ENCODE measurements at regions of chr22 and their contacts with region 1.

Region 1: DNA sequence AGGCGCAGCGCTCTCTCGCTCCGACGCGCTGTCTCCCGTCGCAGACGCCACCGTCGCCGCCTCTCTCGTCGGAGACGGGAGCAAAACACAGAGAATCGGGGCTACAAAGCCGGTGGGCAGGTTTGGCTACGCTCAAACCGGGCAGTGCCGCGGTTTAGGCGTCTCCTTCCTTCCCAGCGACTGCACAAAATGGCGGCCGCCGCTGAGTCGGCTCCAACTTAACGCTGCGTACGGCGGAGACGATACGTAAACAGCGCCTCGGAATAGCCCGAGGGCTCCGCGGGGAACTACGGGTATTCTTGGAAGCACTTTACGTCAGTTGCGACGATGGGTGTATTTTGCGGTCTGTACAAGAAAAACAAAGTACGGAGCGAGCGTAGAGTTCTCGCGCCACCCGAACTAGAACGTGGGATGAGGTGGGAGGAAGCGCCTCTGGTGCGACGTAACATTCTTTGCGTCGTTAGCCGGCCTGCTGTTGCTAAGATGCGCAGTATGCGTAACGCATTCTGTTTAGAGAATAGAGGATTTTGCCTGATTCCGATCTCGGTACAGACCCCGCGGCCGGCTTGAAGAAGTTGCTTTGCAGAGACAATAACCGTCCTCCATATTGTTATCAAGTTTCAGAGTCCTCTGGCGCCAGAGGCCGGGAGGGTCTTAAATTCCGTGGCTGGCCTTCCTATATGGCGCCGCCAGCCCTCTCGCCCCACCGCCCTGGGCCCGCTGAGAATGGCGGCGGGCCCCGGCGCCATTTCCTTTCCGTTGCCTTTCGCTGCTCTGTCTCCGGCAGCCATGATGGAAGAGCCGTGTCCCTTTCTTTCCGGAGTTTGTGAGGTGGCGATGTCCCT is at the start of gene DDX17:
- DNase-seq: peak; percentile 93
- H3K4me3 Mint-ChIP-seq: peak within 1 kb of the TSS; percentile 99
- H3K27ac Mint-ChIP-seq: peak within 1 kb of the TSS; percentile 98
- H3K4me1 Mint-ChIP-seq: peaks cover 42% of the 10 kb centered on the region
- H3K27me3 Mint-ChIP-seq: no peaks in the 10 kb centered on the region
- total RNA-seq, gene DDX17: 356 and 358 TPM in 2 replicates

Region 2: DNA sequence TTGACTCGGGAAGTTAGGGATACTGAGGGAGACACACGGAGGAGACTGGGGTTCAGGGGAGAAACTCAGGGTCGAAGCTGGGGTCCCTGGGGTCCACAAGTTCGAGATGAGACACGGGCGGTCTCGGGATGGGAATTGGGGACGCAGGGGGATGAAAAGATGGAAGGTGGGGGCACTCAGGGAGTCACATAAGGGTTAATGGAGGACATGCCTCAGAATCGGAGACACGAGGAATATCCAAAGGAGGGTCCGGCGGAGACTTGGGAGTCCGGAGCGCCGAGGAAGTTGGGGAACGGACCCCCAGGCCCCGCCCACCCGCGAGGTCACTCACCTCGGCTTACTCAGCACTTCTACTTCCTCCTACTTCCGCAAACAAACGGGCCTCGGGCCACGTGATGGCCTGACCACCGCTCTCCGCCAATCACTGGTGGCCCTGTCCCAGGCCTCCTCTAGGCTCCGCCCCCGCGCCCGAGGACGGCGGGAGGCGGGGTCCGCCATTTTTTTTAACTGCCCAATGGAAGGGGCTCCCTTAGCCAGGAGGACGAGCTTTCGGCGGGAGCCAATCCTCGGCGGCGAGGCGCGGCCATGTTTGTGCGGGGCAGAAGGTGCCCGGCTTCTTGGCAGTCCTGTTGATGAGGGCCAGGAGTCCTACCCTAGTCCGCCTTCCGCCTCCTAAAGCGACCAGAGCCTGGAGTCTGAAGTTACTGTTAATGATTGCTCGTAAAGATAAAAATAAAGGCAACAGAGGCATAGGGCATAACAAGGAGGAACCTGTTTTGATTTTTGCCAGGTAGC is 324.7 kb before region 1 on chr22 and contains the start of gene PLA2G6:
- intact Hi-C with region 1: loop called (anchors 1 kb)
- DNase-seq: peak; percentile 99
- H3K4me3 Mint-ChIP-seq: peak within 1 kb of the TSS; percentile 89
- H3K27ac Mint-ChIP-seq: peak within 1 kb of the TSS; percentile 95
- H3K4me1 Mint-ChIP-seq: peaks cover 48% of the 10 kb centered on the region
- H3K27me3 Mint-ChIP-seq: peaks cover 10% of the 10 kb centered on the region
- total RNA-seq, gene PLA2G6: 34.8 and 34.9 TPM in 2 replicates

Region 3: GRCh38 chr22:38398609-38399461 is 107.5 kb before region 1 on chr22:
- intact Hi-C with region 1: loop called (anchors 2 kb)
- DNase-seq: peak; percentile 76
- H3K4me3 Mint-ChIP-seq: peak overlapping the region; percentile 84
- H3K27ac Mint-ChIP-seq: peak overlapping the region; percentile 23
- H3K4me1 Mint-ChIP-seq: peaks cover 35% of the 10 kb centered on the region
- H3K27me3 Mint-ChIP-seq: peaks cover 9% of the 10 kb centered on the region

Region 4: GRCh38 chr22:38531251-38531938 is 25.1 kb after region 1 on chr22:
- intact Hi-C with region 1: loop called (anchors 2 kb)
- DNase-seq: no peak
- H3K4me3 Mint-ChIP-seq: peak overlapping the region; percentile 52
- H3K27ac Mint-ChIP-seq: peak overlapping the region; percentile 87
- H3K4me1 Mint-ChIP-seq: peaks cover 6% of the 10 kb centered on the region
- H3K27me3 Mint-ChIP-seq: no peaks in the 10 kb centered on the region

Region 5: DNA sequence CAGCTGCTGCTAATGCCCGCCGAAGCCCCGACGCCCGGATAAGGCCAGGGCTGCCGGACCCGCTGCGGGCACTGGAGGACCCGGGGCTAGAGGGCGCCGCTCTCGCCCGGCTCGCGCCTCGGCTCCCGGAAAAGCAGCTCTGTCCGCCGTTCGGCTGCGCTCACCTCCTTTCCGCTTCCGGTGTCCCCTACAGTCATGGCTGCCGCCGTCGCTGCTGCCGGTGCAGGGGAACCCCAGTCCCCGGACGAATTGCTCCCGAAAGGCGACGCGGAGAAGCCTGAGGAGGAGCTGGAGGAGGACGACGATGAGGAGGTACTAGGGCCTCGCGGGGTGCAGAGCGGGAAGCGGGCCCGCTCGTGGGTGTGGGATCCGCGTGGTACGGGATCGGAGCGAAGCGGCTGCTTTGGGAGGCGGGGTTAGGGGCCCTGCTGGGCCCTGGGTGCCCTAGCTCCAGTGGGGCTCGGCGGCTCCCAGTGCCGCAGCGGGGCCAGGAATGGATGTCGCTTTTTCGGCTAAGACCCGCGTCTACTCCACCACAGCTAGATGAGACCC is 175.5 kb after region 1 on chr22 and contains the start of gene TOMM22:
- intact Hi-C with region 1: loop called (anchors 5 kb)
- DNase-seq: peak; percentile 83
- H3K4me3 Mint-ChIP-seq: peak within 1 kb of the TSS; percentile 98
- H3K27ac Mint-ChIP-seq: peak within 1 kb of the TSS; percentile 96
- H3K4me1 Mint-ChIP-seq: peaks cover 21% of the 10 kb centered on the region
- H3K27me3 Mint-ChIP-seq: no peaks in the 10 kb centered on the region
- total RNA-seq, gene TOMM22: 153 and 156 TPM in 2 replicates

Region 6: DNA sequence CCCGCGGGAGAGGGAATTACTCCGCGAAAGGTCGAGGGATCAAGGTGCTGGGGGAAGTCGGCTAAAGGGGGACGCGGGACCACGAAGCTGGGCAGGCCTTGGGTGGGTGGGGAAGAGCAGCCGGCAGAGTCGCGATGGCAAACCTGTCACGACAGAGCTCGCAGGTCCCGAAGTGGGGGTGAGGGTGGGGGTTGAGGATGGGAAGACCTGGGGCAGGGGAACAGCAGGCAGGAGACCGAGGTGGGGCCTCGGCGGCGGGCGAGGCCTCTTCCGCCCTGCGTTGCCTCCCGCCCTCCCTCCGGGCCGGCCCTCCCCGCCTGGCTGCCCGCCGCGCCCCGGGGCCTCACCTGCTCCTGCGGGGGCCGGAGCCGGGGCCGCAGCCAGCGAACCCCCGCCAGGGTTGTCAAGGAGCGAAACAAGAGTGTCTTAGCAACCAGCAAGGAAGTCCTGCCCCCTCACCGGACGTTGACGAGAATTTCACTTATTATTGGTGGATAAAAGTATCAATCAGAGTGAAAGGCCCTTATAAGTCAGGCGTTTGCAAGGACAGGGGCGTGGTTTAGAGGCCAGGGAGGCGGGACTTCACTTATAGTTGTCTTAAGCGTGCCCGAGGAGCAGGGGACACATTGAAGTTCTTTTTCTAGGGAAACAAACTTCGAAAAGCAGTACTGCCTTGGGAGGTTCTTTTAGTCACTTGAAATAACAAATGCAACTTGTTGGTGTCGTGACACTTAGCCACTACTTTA is 287.6 kb after region 1 on chr22 and contains the start of gene DNAL4:
- intact Hi-C with region 1: loop called (anchors 1 kb)
- DNase-seq: peak; percentile 90
- H3K4me3 Mint-ChIP-seq: peak within 1 kb of the TSS; percentile 93
- H3K27ac Mint-ChIP-seq: peak within 1 kb of the TSS; percentile 80
- H3K4me1 Mint-ChIP-seq: peaks cover 22% of the 10 kb centered on the region
- H3K27me3 Mint-ChIP-seq: peaks cover 4% of the 10 kb centered on the region
- total RNA-seq, gene DNAL4: 5.0 TPM in 2 replicates

Measured in activated T-helper 1 cell treated with anti-CD3 and anti-CD28 coated beads, Interleukin-12 subunit alpha, Interleukin-12 subunit beta, Interleukin-2, Interleukin-4 antibody, amounts not matched to agents 30 ng/mL and 10 ng/mL and 1 ng/mL, durations not matched to agents 14 hours and 24 hours and 36 hours (primary cell).